ENCODE measurements at regions of chr3 and their contacts with region 1.

Region 1: DNA sequence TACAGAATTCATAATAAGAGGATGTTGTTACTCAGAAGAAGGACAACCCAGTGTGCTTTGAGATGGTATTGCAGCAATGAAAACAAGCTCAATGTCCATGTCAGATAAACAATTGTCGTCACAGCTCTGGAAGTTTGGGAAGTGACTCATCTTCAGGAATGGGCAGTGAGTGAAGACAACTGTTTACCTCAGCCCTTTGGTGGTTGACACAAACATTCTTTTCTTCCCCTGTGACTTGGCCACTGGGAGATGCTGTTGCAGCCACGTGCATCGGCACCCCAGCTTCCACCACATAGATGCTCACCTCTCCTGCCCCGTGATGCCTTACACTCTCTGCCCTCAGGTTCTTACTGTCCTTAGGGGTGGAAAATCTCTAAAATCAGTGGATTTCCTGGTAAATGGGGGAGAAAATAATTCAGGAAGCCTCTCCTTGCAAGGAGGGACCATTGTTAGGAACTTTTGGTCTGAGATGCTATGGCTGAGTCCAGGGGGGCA is 114.1 kb upstream of the GALNT15 start:
- DNase-seq: no peak
- ATAC-seq: peak; percentile 72
- H3K4me3 ChIP-seq: no peak overlapping the region
- H3K27ac ChIP-seq: peak overlapping the region in 1 of 2 donors; percentile 11
- H3K4me1 ChIP-seq: peaks cover 5% of the 10 kb centered on the region in 2 donors
- H3K27me3 ChIP-seq: no peaks in the 10 kb centered on the region

Region 2: GRCh38 chr3:16079519-16079918 is 19.1 kb after region 1 on chr3:
- intact Hi-C with region 1: no loop called
- DNase-seq: no peak
- ATAC-seq: no peak
- H3K4me3 ChIP-seq: no peak overlapping the region
- H3K27ac ChIP-seq: no peak overlapping the region
- H3K4me1 ChIP-seq: no peaks in the 10 kb centered on the region
- H3K27me3 ChIP-seq: no peaks in the 10 kb centered on the region

Region 3: DNA sequence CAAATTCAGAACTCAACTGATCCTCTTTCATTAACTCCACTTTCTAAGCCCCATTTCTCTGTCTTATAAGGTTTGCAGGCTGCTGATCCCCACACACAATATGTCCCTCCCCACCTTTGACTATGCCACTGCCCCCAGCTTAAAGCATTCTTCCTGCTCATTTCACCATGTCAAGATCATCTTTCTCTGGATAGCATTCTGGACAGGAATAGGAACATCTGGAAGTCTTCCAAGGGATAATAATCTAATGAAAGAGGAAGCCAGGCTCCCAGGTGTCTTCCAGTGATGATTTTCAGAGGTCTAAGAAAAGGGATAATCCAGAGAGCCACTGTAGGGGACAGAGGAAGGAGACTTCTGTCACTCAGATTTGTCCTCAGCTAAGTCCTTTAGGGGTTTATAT is 59.5 kb after region 1 on chr3:
- intact Hi-C with region 1: no loop called
- DNase-seq: no peak
- ATAC-seq: no peak
- H3K4me3 ChIP-seq: no peak overlapping the region
- H3K27ac ChIP-seq: no peak overlapping the region
- H3K4me1 ChIP-seq: no peaks in the 10 kb centered on the region
- H3K27me3 ChIP-seq: no peaks in the 10 kb centered on the region

Region 4: DNA sequence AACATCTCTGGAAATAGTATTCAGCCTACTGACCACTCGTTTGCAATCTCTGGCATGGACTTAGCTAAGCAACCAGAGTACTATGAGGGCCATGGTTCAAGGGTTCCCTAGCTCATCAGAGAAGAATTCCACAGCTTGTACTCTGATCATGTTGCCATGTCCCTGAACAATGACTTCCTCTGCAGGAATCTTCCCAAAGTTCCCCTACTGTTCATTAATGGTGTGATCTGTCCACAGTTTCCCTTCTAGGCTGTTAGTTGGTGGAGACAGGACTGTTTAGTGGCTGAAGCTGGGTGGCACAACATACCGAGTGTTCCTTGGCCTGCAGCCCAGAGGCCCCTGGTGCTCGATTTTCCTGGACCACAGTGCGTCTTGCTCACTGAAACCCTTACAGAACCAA is 69.7 kb after region 1 on chr3:
- intact Hi-C with region 1: loop called in 1 of 2 experiments (anchors 10 kb)
- DNase-seq: peak in 1 of 2 donors; percentile 61
- ATAC-seq: peak; percentile 27
- H3K4me3 ChIP-seq: no peak overlapping the region
- H3K27ac ChIP-seq: peak overlapping the region in 1 of 2 donors; percentile 41
- H3K4me1 ChIP-seq: peaks cover 0 to 3% of the 10 kb centered on the region in 2 donors
- H3K27me3 ChIP-seq: no peaks in the 10 kb centered on the region

Region 5: GRCh38 chr3:16378920-16379319 is 318.5 kb after region 1 on chr3:
- intact Hi-C with region 1: no loop called
- DNase-seq: no peak
- ATAC-seq: no peak
- H3K4me3 ChIP-seq: no peak overlapping the region
- H3K27ac ChIP-seq: no peak overlapping the region
- H3K4me1 ChIP-seq: no peaks in the 10 kb centered on the region
- H3K27me3 ChIP-seq: no peaks in the 10 kb centered on the region